Naive thymus-derived CD4-positive, alpha-beta T cell (primary cell): ENCODE measurements at regions of chr2 and their contacts with region 1.

Region 1: DNA sequence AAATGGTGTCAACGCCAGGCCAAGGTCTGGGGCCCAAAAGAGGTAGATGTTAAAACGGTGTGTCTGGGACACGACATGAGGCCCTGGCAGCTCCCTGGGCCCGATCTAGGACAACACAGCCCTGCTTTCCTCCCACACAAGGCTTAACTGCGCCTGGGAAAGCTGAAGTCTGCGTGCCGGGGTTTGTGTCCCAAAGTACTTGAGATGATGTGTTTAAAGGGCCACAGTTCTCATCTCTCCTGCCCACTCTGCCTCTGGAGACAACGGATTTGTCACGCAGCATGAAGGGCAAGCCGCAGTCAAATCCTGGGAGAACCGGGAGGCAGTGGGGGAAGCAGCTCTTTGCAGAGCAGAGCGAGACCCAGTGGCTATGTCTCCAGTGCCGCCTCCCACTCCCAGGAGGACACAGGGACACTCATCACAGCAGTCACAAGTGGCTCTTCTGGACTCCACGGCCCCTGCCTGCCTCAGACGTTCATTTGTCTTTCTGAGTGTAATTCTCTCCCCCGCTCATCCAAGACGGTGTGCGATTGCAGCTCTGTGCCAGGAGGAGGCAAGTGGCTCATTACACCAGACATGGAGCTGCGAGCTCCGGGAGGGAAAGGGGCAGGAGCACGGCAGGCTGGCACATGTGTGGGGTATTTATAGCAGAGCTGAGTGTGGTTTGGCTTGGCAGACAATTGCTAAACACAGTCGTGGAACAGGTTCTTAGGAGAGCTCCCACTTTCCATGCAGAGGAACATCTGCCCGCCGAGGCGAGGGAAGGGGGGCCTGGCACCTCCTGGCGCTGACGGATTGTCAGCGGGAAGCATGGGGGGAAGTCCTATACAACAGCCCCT is 57.7 kb upstream of the SEMA4C start:
- DNase-seq: no peak
- ATAC-seq: no peak
- H3K4me3 ChIP-seq: no peak overlapping the region
- H3K4me3 Mint-ChIP-seq: no peak overlapping the region
- H3K27ac ChIP-seq: no peak overlapping the region
- H3K27ac Mint-ChIP-seq: no peak overlapping the region
- H3K4me1 ChIP-seq: peaks cover 19 to 23% of the 10 kb centered on the region in 2 donors
- H3K4me1 Mint-ChIP-seq: peaks cover 16 to 44% (median 29%) of the 10 kb centered on the region in 7 donors
- H3K27me3 ChIP-seq: no peaks in the 10 kb centered on the region
- H3K27me3 Mint-ChIP-seq: peaks cover 0 to 26% (median 0%) of the 10 kb centered on the region in 5 donors

Region 2: DNA sequence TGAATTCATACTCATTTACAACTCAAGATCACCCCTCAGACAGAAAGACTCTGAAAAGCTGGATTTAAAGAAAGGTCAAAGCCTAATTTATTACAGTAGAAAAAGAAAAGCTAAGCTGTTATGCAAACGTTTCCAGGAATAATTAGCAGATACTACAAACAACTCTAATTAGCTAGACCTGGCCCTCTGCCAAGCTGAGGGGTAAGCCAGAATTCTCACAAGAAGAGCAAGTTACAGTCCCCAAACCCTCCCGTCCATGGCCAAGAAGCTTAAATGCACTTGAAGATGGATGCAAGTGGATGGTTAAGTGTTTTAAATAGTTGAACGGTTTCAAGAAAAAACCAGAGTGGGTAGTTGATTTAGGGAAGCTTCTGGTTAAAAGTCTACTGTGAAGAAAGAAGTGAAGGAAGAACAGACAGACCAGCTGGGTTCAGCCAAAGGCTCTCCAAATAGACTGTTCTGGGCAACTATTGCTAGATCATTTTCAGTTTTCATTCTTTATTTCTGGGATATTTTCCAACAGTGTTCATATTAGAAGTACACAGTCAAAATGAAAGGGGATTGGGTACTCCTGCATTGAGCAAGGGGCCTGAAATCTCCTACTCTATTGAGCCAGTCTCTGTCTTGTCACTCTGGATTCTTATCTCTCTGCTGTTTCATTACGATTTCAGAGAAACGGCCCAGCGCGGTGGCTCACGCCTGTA is 192.6 kb before region 1 on chr2:
- CTCF ChIA-PET with region 1: no interaction called
- POLR2A ChIA-PET with region 1: no interaction called
- intact Hi-C with region 1: no loop called
- DNase-seq: no peak
- ATAC-seq: no peak
- H3K4me3 ChIP-seq: no peak overlapping the region
- H3K4me3 Mint-ChIP-seq: no peak overlapping the region
- H3K27ac ChIP-seq: no peak overlapping the region
- H3K27ac Mint-ChIP-seq: peak overlapping the region in 1 of 9 donors; percentile 59
- H3K4me1 ChIP-seq: peaks cover 6% of the 10 kb centered on the region in 2 donors
- H3K4me1 Mint-ChIP-seq: peaks cover 17 to 36% (median 27%) of the 10 kb centered on the region in 7 donors
- H3K27me3 ChIP-seq: no peaks in the 10 kb centered on the region
- H3K27me3 Mint-ChIP-seq: no peaks in the 10 kb centered on the region

Region 3: GRCh38 chr2:96888072-96889011 is 39.3 kb before region 1 on chr2:
- CTCF ChIA-PET with region 1: no interaction called
- POLR2A ChIA-PET with region 1: interaction called, 19 read pairs
- intact Hi-C with region 1: no loop called
- DNase-seq: no peak
- ATAC-seq: peak; percentile 63
- H3K4me3 ChIP-seq: no peak overlapping the region
- H3K4me3 Mint-ChIP-seq: peak overlapping the region in 8 of 10 donors; percentile 0 to 60 (median 53)
- H3K27ac ChIP-seq: no peak overlapping the region
- H3K27ac Mint-ChIP-seq: peak overlapping the region; percentile 49 to 95 (median 86)
- H3K4me1 ChIP-seq: peaks cover 14 to 39% of the 10 kb centered on the region in 2 donors
- H3K4me1 Mint-ChIP-seq: peaks cover 37 to 64% (median 53%) of the 10 kb centered on the region in 7 donors
- H3K27me3 ChIP-seq: no peaks in the 10 kb centered on the region
- H3K27me3 Mint-ChIP-seq: no peaks in the 10 kb centered on the region

Region 4: GRCh38 chr2:96895726-96896651 is 31.6 kb before region 1 on chr2:
- CTCF ChIA-PET with region 1: no interaction called
- POLR2A ChIA-PET with region 1: interaction called, 19 read pairs
- intact Hi-C with region 1: no loop called
- DNase-seq: no peak
- ATAC-seq: peak; percentile 41
- H3K4me3 ChIP-seq: no peak overlapping the region
- H3K4me3 Mint-ChIP-seq: peak overlapping the region in 7 of 10 donors; percentile 34 to 72 (median 52)
- H3K27ac ChIP-seq: no peak overlapping the region
- H3K27ac Mint-ChIP-seq: peak overlapping the region; percentile 56 to 88 (median 81)
- H3K4me1 ChIP-seq: peaks cover 24 to 47% of the 10 kb centered on the region in 2 donors
- H3K4me1 Mint-ChIP-seq: peaks cover 44 to 75% (median 68%) of the 10 kb centered on the region in 7 donors
- H3K27me3 ChIP-seq: no peaks in the 10 kb centered on the region
- H3K27me3 Mint-ChIP-seq: no peaks in the 10 kb centered on the region

Region 5: GRCh38 chr2:96940001-96940615 is 12.5 kb after region 1 on chr2:
- CTCF ChIA-PET with region 1: interaction called, 3 read pairs
- POLR2A ChIA-PET with region 1: interaction called, 47 read pairs
- intact Hi-C with region 1: loop called in 1 of 2 experiments (anchors 1 kb)
- DNase-seq: no peak
- ATAC-seq: no peak
- H3K4me3 ChIP-seq: no peak overlapping the region
- H3K4me3 Mint-ChIP-seq: peak overlapping the region in 8 of 10 donors; percentile 50 to 92 (median 78)
- H3K27ac ChIP-seq: no peak overlapping the region
- H3K27ac Mint-ChIP-seq: peak overlapping the region in 8 of 9 donors; percentile 43 to 94 (median 80)
- H3K4me1 ChIP-seq: peaks cover 19 to 25% of the 10 kb centered on the region in 2 donors
- H3K4me1 Mint-ChIP-seq: peaks cover 24 to 55% (median 46%) of the 10 kb centered on the region in 7 donors
- H3K27me3 ChIP-seq: no peaks in the 10 kb centered on the region
- H3K27me3 Mint-ChIP-seq: peaks cover 0 to 10% (median 0%) of the 10 kb centered on the region in 5 donors

Region 6: DNA sequence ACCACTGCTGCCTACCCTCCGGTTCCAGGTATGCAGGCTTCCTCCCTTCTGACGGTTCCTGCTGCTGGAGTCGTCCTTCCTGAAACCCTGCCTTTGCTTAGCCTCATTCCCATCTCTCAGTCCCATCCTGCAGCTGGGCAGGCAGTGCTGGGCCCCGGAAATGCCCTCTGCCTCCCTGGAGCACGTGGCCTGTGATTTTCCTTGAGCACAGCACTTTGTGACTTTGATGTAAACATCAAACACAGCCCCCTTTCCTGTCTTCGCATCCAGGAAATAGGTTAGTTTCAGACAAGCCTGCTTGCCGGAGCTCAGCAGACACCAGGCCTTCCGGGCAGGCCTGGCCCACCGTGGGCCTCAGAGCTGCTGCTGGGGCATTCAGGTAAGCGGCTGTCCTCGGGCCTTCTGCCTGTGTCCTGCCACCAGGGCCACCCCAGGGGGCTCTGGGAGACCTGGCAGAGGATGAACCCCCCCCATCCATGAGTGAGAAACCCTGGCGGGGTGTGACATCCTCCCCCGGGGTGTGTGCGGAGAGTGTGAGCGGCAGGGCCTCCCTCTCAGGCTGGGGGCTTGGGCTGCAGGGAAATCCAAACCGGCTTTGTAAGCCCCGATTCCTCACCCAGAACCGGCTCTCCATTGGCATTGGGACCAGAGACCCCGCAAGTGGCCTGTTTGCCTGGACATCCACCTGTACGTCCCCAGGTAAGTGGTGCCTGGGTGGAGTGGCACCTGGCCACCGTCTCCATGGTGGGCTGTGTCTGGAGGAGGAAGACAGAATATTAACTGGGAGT is 785.9 kb after region 1 on chr2 and contains the start of gene ZAP70:
- CTCF ChIA-PET with region 1: no interaction called
- POLR2A ChIA-PET with region 1: no interaction called
- intact Hi-C with region 1: no loop called
- DNase-seq: peak; percentile 35 to 84 (median 78)
- ATAC-seq: peak; percentile 74
- H3K4me3 ChIP-seq: peak within 1 kb of the TSS; percentile 94
- H3K4me3 Mint-ChIP-seq: peak within 1 kb of the TSS; percentile 86 to 100 (median 94)
- H3K27ac ChIP-seq: peak within 1 kb of the TSS; percentile 95
- H3K27ac Mint-ChIP-seq: peak within 1 kb of the TSS; percentile 94 to 100 (median 99)
- H3K4me1 ChIP-seq: peaks cover 57 to 67% of the 10 kb centered on the region in 2 donors
- H3K4me1 Mint-ChIP-seq: peaks cover 63 to 89% (median 75%) of the 10 kb centered on the region in 7 donors
- H3K27me3 ChIP-seq: no peaks in the 10 kb centered on the region
- H3K27me3 Mint-ChIP-seq: peaks cover 0 to 2% (median 0%) of the 10 kb centered on the region in 5 donors
- total RNA-seq, gene ZAP70: 354 to 432 (median 382) TPM